IMR-90 (cell line): ENCODE measurements at regions of chr3 and their contacts with region 1.

Region 1: GRCh38 chr3:64150623-64151207 is 74.6 kb downstream of the PRICKLE2 start:
- DNase-seq: peak; percentile 99
- ATAC-seq: peak; percentile 97
- H3K4me3 ChIP-seq: no peak overlapping the region
- H3K27ac ChIP-seq: peak overlapping the region; percentile 96
- H3K4me1 ChIP-seq: peaks cover 18% of the 10 kb centered on the region
- H3K27me3 ChIP-seq: no peaks in the 10 kb centered on the region
- CTCF ChIP-seq: no peak
- POLR2A ChIP-seq: peak; percentile 54; the same call in 1 of the 2 replicates
- RAD21 ChIP-seq: peak; percentile 16; the same call in 1 of the 2 replicates

Region 2: GRCh38 chr3:64163755-64164148 is 13.0 kb after region 1 on chr3:
- CTCF ChIA-PET with region 1: no interaction called
- POLR2A ChIA-PET with region 1: no interaction called
- dilution Hi-C with region 1: no loop called
- in situ Hi-C with region 1: no loop called
- intact Hi-C with region 1: loop called (anchors 1 kb)
- DNase-seq: peak; percentile 96
- ATAC-seq: peak; percentile 74
- H3K4me3 ChIP-seq: no peak overlapping the region
- H3K27ac ChIP-seq: peak overlapping the region; percentile 63
- H3K4me1 ChIP-seq: peaks cover 12% of the 10 kb centered on the region
- H3K27me3 ChIP-seq: no peaks in the 10 kb centered on the region
- CTCF ChIP-seq: no peak
- POLR2A ChIP-seq: no peak
- RAD21 ChIP-seq: 0 out of 2 replicates have a peak, but pooled peaks have one; percentile 12

Region 3: DNA sequence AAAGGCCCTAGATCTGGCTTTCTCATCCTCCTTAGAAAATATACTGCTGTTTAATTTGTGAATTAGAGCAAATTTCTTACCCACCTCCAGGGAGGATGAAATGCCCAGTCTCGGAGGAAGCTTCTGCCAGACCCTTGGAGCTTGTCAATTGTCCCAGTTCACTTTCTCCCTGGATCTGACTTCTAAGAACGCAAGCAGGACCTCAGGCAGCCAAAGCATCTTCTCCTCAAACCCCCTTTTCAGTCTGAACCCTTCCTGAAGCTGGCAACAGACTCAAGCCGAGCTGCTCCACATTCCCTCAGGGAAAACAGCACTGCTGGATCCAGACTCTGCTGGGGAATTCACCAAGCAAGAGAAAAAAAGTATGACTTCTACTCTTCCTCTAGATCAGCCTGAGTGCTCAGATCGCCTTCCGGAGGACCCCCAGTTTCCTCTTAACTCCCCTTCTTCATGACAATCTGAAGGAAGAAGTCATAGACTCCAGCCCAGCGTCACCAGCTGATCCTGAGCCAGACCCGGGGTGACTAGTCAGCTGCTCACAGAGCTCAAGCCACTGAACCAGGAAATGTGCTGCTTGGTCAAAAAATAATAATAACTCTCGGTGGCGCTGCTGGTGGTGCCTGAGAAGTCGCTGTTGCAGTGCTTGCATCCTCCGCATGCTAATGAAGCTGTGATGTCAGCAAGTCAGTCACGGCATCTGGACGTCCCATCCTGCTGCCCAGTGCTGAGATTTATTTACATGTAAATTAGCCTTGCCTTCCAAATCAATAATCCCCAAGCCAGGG is 74.3 kb after region 1 on chr3 and contains the start of gene PRICKLE2:
- CTCF ChIA-PET with region 1: no interaction called
- POLR2A ChIA-PET with region 1: no interaction called
- dilution Hi-C with region 1: no loop called
- in situ Hi-C with region 1: no loop called
- intact Hi-C with region 1: loop called (anchors 5 kb)
- DNase-seq: peak; percentile 96
- ATAC-seq: peak; percentile 73
- H3K4me3 ChIP-seq: peak within 1 kb of the TSS; percentile 38
- H3K27ac ChIP-seq: peak within 1 kb of the TSS; percentile 89
- H3K4me1 ChIP-seq: peaks cover 32% of the 10 kb centered on the region
- H3K27me3 ChIP-seq: no peaks in the 10 kb centered on the region
- CTCF ChIP-seq: peak; percentile 49
- POLR2A ChIP-seq: peak; percentile 67
- RAD21 ChIP-seq: peak; percentile 70
- total RNA-seq, gene PRICKLE2: 14.2 and 16.7 TPM in 2 replicates

Region 4: GRCh38 chr3:64351713-64352638 is 201.3 kb after region 1 on chr3:
- CTCF ChIA-PET with region 1: no interaction called
- POLR2A ChIA-PET with region 1: no interaction called
- dilution Hi-C with region 1: no loop called
- in situ Hi-C with region 1: no loop called
- intact Hi-C with region 1: loop called (anchors 5 kb)
- DNase-seq: peak; percentile 54
- ATAC-seq: peak; percentile 45; the same call in 1 of the 2 replicates
- H3K4me3 ChIP-seq: no peak overlapping the region
- H3K27ac ChIP-seq: peak overlapping the region; percentile 67
- H3K4me1 ChIP-seq: peaks cover 22% of the 10 kb centered on the region
- H3K27me3 ChIP-seq: no peaks in the 10 kb centered on the region
- CTCF ChIP-seq: no peak
- POLR2A ChIP-seq: no peak
- RAD21 ChIP-seq: no peak

Region 5: GRCh38 chr3:64399205-64399800 is 248.6 kb after region 1 on chr3:
- CTCF ChIA-PET with region 1: no interaction called
- POLR2A ChIA-PET with region 1: no interaction called
- dilution Hi-C with region 1: no loop called
- in situ Hi-C with region 1: no loop called
- intact Hi-C with region 1: loop called (anchors 5 kb)
- DNase-seq: peak; percentile 70
- ATAC-seq: peak; percentile 89
- H3K4me3 ChIP-seq: no peak overlapping the region
- H3K27ac ChIP-seq: no peak overlapping the region
- H3K4me1 ChIP-seq: peaks cover 2% of the 10 kb centered on the region
- H3K27me3 ChIP-seq: no peaks in the 10 kb centered on the region
- CTCF ChIP-seq: peak; percentile 85
- POLR2A ChIP-seq: no peak
- RAD21 ChIP-seq: peak; percentile 95

Region 6: GRCh38 chr3:64484289-64484992 is 333.7 kb after region 1 on chr3:
- CTCF ChIA-PET with region 1: no interaction called
- POLR2A ChIA-PET with region 1: no interaction called
- dilution Hi-C with region 1: no loop called
- in situ Hi-C with region 1: no loop called
- intact Hi-C with region 1: loop called (anchors 5 kb)
- DNase-seq: peak; percentile 80
- ATAC-seq: peak; percentile 100
- H3K4me3 ChIP-seq: no peak overlapping the region
- H3K27ac ChIP-seq: no peak overlapping the region
- H3K4me1 ChIP-seq: no peaks in the 10 kb centered on the region
- H3K27me3 ChIP-seq: no peaks in the 10 kb centered on the region
- CTCF ChIP-seq: peak; percentile 92
- POLR2A ChIP-seq: 0 out of 2 replicates have a peak, but pooled peaks have one; percentile 34
- RAD21 ChIP-seq: peak; percentile 99